ENCODE measurements at regions of chr1 and their contacts with region 1.

Region 1: GRCh38 chr1:226062558-226063223 is at the start of gene H3-3A:
- DNase-seq: peak; percentile 98
- ATAC-seq: peak; percentile 81
- H3K4me3 ChIP-seq: peak within 1 kb of the TSS; percentile 86 to 100 (median 96)
- H3K4me3 Mint-ChIP-seq: peak within 1 kb of the TSS; percentile 100
- H3K27ac ChIP-seq: peak within 1 kb of the TSS; percentile 93 to 96
- H3K27ac Mint-ChIP-seq: peak within 1 kb of the TSS; percentile 99
- H3K4me1 ChIP-seq: peaks cover 33 to 34% of the 10 kb centered on the region in 2 donors
- H3K4me1 Mint-ChIP-seq: peaks cover 46% of the 10 kb centered on the region
- H3K27me3 ChIP-seq: no peaks in the 10 kb centered on the region
- H3K27me3 Mint-ChIP-seq: no peaks in the 10 kb centered on the region
- CTCF ChIP-seq: no peak
- total RNA-seq, gene H3-3A: 519 and 561 TPM in 2 replicates

Region 2: DNA sequence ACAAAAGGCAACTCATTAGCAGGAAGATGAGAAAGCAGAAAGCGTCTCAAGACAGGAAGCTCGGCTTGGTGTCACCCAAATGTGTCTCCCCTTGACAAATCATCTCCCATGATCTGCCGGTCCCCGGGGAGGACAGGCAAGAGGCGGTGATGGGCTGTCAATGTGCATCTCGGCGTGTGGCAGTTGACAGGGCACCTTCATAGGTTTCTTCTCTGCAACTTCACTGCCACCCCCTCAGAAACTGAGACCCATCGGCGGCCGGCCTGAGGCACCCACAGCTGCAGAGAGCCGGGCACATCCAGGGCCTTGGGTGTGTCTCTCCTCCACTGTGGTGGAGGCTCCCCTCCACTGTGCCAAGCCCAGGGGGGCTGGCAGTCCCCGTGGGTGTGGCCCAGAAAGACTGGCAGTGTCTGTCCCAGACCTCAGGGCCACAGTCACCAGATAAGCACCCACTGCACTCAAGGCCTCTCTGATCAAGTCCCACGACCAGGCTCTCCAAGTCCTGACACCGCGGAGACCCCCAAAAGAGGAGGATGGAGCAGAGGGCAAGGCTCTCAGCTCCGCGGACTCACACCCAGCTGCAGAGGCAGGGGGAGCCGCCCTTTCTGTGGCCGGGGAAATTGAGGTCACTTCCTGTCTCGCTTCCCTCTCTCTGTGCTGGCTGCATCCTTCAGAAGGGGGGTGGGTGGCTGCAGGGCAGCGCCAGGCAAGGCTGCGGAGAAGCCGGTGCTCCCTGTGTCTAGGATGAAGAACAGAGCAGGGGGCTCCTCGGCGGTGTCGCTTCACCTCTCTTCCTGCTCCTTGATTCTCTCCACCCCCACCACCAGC is 595.3 kb before region 1 on chr1:
- CTCF ChIA-PET with region 1: interaction called, 7 read pairs
- POLR2A ChIA-PET with region 1: interaction called, 3 read pairs
- intact Hi-C with region 1: loop called (anchors 1 kb)
- DNase-seq: peak; percentile 92
- ATAC-seq: peak; percentile 88
- H3K4me3 ChIP-seq: peak overlapping the region; percentile 68 to 83 (median 73)
- H3K4me3 Mint-ChIP-seq: peak overlapping the region; percentile 91
- H3K27ac ChIP-seq: peak overlapping the region; percentile 82 to 97
- H3K27ac Mint-ChIP-seq: peak overlapping the region; percentile 97
- H3K4me1 ChIP-seq: peaks cover 15 to 34% of the 10 kb centered on the region in 2 donors
- H3K4me1 Mint-ChIP-seq: peaks cover 37% of the 10 kb centered on the region
- H3K27me3 ChIP-seq: no peaks in the 10 kb centered on the region
- H3K27me3 Mint-ChIP-seq: no peaks in the 10 kb centered on the region
- CTCF ChIP-seq: no peak

Region 3: GRCh38 chr1:225877580-225877979 is 185.1 kb before region 1 on chr1:
- CTCF ChIA-PET with region 1: no interaction called
- POLR2A ChIA-PET with region 1: no interaction called
- intact Hi-C with region 1: no loop called
- DNase-seq: peak; percentile 39
- ATAC-seq: no peak
- H3K4me3 ChIP-seq: no peak overlapping the region
- H3K4me3 Mint-ChIP-seq: no peak overlapping the region
- H3K27ac ChIP-seq: no peak overlapping the region
- H3K27ac Mint-ChIP-seq: peak overlapping the region; percentile 84
- H3K4me1 ChIP-seq: peaks cover 30 to 34% of the 10 kb centered on the region in 2 donors
- H3K4me1 Mint-ChIP-seq: peaks cover 42% of the 10 kb centered on the region
- H3K27me3 ChIP-seq: no peaks in the 10 kb centered on the region
- H3K27me3 Mint-ChIP-seq: no peaks in the 10 kb centered on the region
- CTCF ChIP-seq: no peak

Region 4: DNA sequence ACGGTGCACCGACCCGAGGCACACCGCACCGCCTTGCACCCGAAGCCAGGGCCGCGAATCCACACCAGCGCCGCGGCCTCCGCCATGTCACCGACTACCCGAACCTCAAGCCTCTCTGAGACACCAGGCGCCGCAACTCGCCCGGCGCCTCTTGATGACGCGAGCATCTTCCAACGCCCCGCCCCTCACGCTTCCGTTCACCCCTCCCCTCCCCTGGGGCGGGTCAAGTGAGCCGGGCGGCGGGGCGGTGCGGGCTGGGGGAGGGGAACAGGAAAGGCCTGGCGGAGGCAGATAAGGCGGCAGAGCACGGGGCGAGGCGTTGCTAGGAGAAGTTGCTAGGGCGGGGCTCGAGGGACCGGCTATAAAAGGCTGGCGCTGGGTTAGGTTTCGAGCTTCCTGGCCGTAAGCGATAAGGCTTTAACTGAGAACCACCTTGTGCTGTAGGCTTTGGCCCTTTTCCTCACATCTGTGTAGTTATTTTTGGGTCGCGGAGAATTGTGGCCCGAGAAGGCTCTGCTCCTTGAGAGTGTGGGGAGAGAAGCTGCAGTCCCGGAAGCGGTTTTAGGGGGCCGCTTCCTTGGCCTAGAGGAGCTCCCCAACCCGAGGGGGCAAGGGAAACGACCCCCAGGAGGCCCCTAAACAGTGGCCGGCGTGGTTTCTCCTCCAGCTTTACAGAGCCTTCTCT is 63.3 kb before region 1 on chr1 and contains the start of gene SDE2:
- CTCF ChIA-PET with region 1: interaction called, 48 read pairs
- POLR2A ChIA-PET with region 1: interaction called, 195 read pairs
- intact Hi-C with region 1: loop called (anchors 1 kb)
- DNase-seq: peak; percentile 100
- ATAC-seq: peak; percentile 81
- H3K4me3 ChIP-seq: peak within 1 kb of the TSS; percentile 75 to 93 (median 88)
- H3K4me3 Mint-ChIP-seq: peak within 1 kb of the TSS; percentile 100
- H3K27ac ChIP-seq: peak within 1 kb of the TSS; percentile 100
- H3K27ac Mint-ChIP-seq: peak within 1 kb of the TSS; percentile 97
- H3K4me1 ChIP-seq: peaks cover 65 to 72% of the 10 kb centered on the region in 2 donors
- H3K4me1 Mint-ChIP-seq: peaks cover 74% of the 10 kb centered on the region
- H3K27me3 ChIP-seq: no peaks in the 10 kb centered on the region
- H3K27me3 Mint-ChIP-seq: no peaks in the 10 kb centered on the region
- CTCF ChIP-seq: no peak
- total RNA-seq, gene SDE2: 26.0 and 26.3 TPM in 2 replicates

Region 5: GRCh38 chr1:226083302-226084101 is 20.8 kb after region 1 on chr1:
- CTCF ChIA-PET with region 1: interaction called, 38 read pairs
- POLR2A ChIA-PET with region 1: interaction called, 14 read pairs
- intact Hi-C with region 1: loop called (anchors 1 kb)
- DNase-seq: peak; percentile 94
- ATAC-seq: peak; percentile 94
- H3K4me3 ChIP-seq: peak overlapping the region; percentile 15 to 83 (median 73)
- H3K4me3 Mint-ChIP-seq: peak overlapping the region; percentile 91
- H3K27ac ChIP-seq: peak overlapping the region; percentile 13 to 71
- H3K27ac Mint-ChIP-seq: peak overlapping the region; percentile 87
- H3K4me1 ChIP-seq: peaks cover 6 to 19% of the 10 kb centered on the region in 2 donors
- H3K4me1 Mint-ChIP-seq: peaks cover 13% of the 10 kb centered on the region
- H3K27me3 ChIP-seq: no peaks in the 10 kb centered on the region
- H3K27me3 Mint-ChIP-seq: no peaks in the 10 kb centered on the region
- CTCF ChIP-seq: no peak

Region 6: GRCh38 chr1:226135059-226135651 is 72.5 kb after region 1 on chr1:
- CTCF ChIA-PET with region 1: interaction called, 3 read pairs
- POLR2A ChIA-PET with region 1: interaction called, 12 read pairs
- intact Hi-C with region 1: no loop called
- DNase-seq: no peak
- ATAC-seq: no peak
- H3K4me3 ChIP-seq: no peak overlapping the region
- H3K4me3 Mint-ChIP-seq: no peak overlapping the region
- H3K27ac ChIP-seq: peak overlapping the region in 1 of 2 donors; percentile 57
- H3K27ac Mint-ChIP-seq: peak overlapping the region; percentile 99
- H3K4me1 ChIP-seq: peaks cover 46 to 54% of the 10 kb centered on the region in 2 donors
- H3K4me1 Mint-ChIP-seq: peaks cover 53% of the 10 kb centered on the region
- H3K27me3 ChIP-seq: no peaks in the 10 kb centered on the region
- H3K27me3 Mint-ChIP-seq: no peaks in the 10 kb centered on the region
- CTCF ChIP-seq: no peak

Region 7: DNA sequence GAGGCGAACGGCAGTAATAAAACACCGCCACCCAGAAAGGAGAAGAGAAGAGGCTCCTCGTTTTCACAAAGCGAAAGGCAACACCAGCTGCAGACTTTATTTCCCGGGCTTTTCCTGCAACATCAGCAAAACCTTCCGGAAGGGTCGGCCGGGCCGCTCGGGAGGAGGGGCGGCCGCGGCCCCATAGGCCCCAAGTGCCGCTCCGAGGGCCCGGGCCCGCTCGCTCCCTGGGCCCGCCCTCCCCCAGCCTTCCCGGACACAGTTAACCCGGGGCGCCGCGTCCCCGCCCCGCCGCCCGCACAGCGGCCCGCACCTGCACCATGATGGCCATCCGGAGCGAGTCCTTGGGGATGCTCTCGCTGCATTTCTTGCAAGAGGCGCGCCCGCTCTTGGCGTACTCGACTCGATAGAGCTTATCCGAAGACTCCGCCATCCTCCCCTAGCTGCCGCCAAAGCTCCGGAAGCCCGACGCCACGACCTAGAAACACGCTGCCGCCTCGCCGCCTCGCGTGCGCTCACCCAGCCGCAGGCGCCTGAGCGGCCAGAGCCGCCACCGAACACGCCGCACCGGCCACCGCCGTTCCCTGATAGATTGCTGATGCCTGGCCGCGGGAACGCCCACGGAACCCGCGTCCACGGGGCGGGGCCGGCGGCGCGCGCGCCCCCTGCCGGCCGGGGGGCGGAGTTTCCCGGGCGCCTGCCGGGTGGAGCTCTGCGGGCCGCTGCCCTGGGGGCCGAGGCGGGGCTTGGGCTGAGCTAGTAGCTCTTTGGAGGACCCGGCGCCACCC is 345.0 kb after region 1 on chr1 and contains the start of gene PARP1:
- CTCF ChIA-PET with region 1: interaction called, 4 read pairs
- POLR2A ChIA-PET with region 1: no interaction called
- intact Hi-C with region 1: loop called (anchors 2 kb)
- DNase-seq: peak; percentile 94
- ATAC-seq: peak; percentile 83
- H3K4me3 ChIP-seq: peak within 1 kb of the TSS; percentile 81 to 95 (median 83)
- H3K4me3 Mint-ChIP-seq: peak within 1 kb of the TSS; percentile 91
- H3K27ac ChIP-seq: peak within 1 kb of the TSS; percentile 78 to 88
- H3K27ac Mint-ChIP-seq: peak within 1 kb of the TSS; percentile 93
- H3K4me1 ChIP-seq: peaks cover 45 to 46% of the 10 kb centered on the region in 2 donors
- H3K4me1 Mint-ChIP-seq: peaks cover 43% of the 10 kb centered on the region
- H3K27me3 ChIP-seq: no peaks in the 10 kb centered on the region
- H3K27me3 Mint-ChIP-seq: no peaks in the 10 kb centered on the region
- CTCF ChIP-seq: peak; percentile 88
- total RNA-seq, gene PARP1: 180 and 187 TPM in 2 replicates

Measured in B cell (primary cell).